ENCODE measurements at regions of chr20 and their contacts with region 1.

Region 1: DNA sequence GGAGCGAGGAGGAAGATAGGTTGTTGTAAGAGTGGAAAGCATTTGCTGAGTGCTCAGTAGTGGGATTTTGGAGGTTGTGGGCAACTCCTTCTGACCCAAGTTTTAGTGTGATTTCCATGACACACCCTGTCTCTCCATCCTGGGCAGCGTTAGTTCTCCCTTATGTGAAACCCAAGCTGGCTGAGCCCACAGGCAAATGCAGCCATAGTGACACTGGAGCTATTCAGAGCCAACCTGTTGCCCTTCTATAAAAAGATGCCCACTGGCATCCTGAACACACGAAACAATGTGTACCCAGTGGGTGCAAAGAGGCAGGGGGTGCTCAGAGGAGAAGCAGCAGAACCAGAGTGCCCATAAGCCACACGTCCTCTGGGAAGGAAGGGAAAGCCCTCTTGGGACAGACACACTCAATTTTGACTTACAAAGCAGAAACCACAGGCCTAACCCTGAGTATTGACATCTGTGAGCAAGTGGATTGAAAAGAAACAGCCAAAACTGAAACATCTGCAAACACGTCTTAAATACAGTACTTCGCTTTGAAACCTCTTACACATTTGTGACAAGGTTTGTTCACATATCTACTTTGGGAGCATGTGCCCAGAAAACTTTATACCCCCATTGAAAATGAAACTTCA is 54.6 kb downstream of the BPIFB1 start:
- DNase-seq: no peak
- ATAC-seq: no peak
- H3K4me3 ChIP-seq: no peak overlapping the region
- H3K27ac ChIP-seq: no peak overlapping the region
- H3K4me1 ChIP-seq: peaks cover 56% of the 10 kb centered on the region
- H3K27me3 ChIP-seq: peaks cover 3 to 16% of the 10 kb centered on the region in 2 experiments; a peak in 3 of 5 replicates
- CTCF ChIP-seq: no peak
- EP300 ChIP-seq: no peak
- POLR2A ChIP-seq: no peak
- RAD21 ChIP-seq: no peak

Region 2: GRCh38 chr20:33351696-33352095 is 14.0 kb after region 1 on chr20:
- CTCF ChIA-PET with region 1: no interaction called
- POLR2A ChIA-PET with region 1: no interaction called
- in situ Hi-C with region 1: no loop called
- intact Hi-C with region 1: loop called (anchors 2 kb)
- DNase-seq: peak; percentile 64
- ATAC-seq: peak; percentile 54
- H3K4me3 ChIP-seq: no peak overlapping the region
- H3K27ac ChIP-seq: no peak overlapping the region
- H3K4me1 ChIP-seq: peaks cover 10% of the 10 kb centered on the region
- H3K27me3 ChIP-seq: no peaks in the 10 kb centered on the region
- CTCF ChIP-seq: no peak
- EP300 ChIP-seq: no peak
- POLR2A ChIP-seq: no peak
- RAD21 ChIP-seq: no peak

Region 3: GRCh38 chr20:33647603-33648395 is 310.2 kb after region 1 on chr20:
- CTCF ChIA-PET with region 1: no interaction called
- POLR2A ChIA-PET with region 1: no interaction called
- in situ Hi-C with region 1: no loop called
- intact Hi-C with region 1: no loop called
- DNase-seq: no peak
- ATAC-seq: peak; percentile 5
- H3K4me3 ChIP-seq: no peak overlapping the region
- H3K27ac ChIP-seq: no peak overlapping the region
- H3K4me1 ChIP-seq: peaks cover 15% of the 10 kb centered on the region
- H3K27me3 ChIP-seq: no peaks in the 10 kb centered on the region
- CTCF ChIP-seq: 0 out of 2 replicates have a peak, but pooled peaks have one; percentile 22
- EP300 ChIP-seq: no peak
- POLR2A ChIP-seq: peak; percentile 9 to 36; a peak in 2 of 4 replicates
- RAD21 ChIP-seq: no peak